Naive thymus-derived CD4-positive, alpha-beta T cell (primary cell): ENCODE measurements at regions of chr1 and their contacts with region 1.

Region 1: DNA sequence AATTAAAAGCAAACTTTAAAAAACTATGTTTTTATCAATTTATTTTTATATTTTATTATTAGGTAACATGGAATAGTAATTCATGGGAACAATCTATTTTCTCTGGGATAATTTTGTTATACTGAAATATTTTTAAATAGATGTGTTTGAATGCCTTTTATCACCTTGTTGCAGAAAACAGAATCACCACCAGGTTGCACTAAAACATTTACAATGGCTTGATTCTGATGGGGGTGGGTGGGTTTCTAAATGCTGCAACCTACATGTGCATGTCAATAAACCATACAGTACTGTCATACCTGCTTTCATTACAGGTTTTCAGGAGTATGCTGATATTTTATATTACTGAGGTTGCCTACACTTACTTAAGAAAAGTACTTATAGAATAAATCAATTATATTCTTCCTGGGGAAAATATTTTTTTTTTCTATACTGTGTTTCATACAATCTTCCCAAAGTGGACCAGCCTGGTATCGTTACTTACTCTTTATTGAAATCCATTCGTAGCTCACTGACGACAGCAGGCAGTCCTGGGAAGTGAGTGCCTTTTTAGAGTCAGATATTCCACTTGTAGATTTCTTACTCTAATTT is 132.8 kb downstream of the PTPRC start:
- DNase-seq: no peak
- ATAC-seq: peak; percentile 40
- H3K4me3 ChIP-seq: no peak overlapping the region
- H3K4me3 Mint-ChIP-seq: no peak overlapping the region
- H3K27ac ChIP-seq: no peak overlapping the region
- H3K27ac Mint-ChIP-seq: no peak overlapping the region
- H3K4me1 ChIP-seq: no peaks in the 10 kb centered on the region
- H3K4me1 Mint-ChIP-seq: peaks cover 0 to 12% (median 3%) of the 10 kb centered on the region in 7 donors
- H3K27me3 ChIP-seq: no peaks in the 10 kb centered on the region
- H3K27me3 Mint-ChIP-seq: peaks cover 0 to 3% (median 0%) of the 10 kb centered on the region in 5 donors

Region 2: DNA sequence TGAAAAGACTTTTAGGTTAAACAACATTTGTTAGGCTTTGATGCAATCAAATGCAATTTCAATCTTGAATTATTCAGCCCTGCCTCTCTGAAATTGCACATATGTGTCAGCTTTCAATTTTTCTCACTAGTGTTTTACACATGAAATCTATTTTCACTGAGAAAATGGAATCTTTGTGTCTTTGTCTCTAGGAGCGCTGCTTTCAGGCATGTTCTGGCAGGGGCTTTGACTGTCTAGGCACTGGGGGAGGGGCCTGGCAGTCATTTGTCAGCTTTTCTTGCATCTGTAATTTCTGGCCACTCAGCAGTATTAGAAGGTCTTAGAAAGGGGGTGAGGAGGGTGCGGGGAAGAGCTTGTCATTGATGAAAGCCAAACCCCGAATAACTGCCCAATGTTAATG is 131.5 kb after region 1 on chr1:
- CTCF ChIA-PET with region 1: no interaction called
- POLR2A ChIA-PET with region 1: no interaction called
- intact Hi-C with region 1: loop called in 1 of 2 experiments (anchors 10 kb)
- DNase-seq: no peak
- ATAC-seq: no peak
- H3K4me3 ChIP-seq: no peak overlapping the region
- H3K4me3 Mint-ChIP-seq: no peak overlapping the region
- H3K27ac ChIP-seq: no peak overlapping the region
- H3K27ac Mint-ChIP-seq: peak overlapping the region in 1 of 9 donors; percentile 12
- H3K4me1 ChIP-seq: peaks cover 0 to 12% of the 10 kb centered on the region in 2 donors
- H3K4me1 Mint-ChIP-seq: peaks cover 9 to 59% (median 24%) of the 10 kb centered on the region in 7 donors
- H3K27me3 ChIP-seq: no peaks in the 10 kb centered on the region
- H3K27me3 Mint-ChIP-seq: no peaks in the 10 kb centered on the region

Region 3: GRCh38 chr1:199046618-199047017 is 275.0 kb after region 1 on chr1:
- CTCF ChIA-PET with region 1: interaction called, 4 read pairs
- POLR2A ChIA-PET with region 1: no interaction called
- intact Hi-C with region 1: loop called in 1 of 2 experiments (anchors 5 kb)
- DNase-seq: no peak
- ATAC-seq: no peak
- H3K4me3 ChIP-seq: no peak overlapping the region
- H3K4me3 Mint-ChIP-seq: no peak overlapping the region
- H3K27ac ChIP-seq: no peak overlapping the region
- H3K27ac Mint-ChIP-seq: peak overlapping the region in 1 of 9 donors; percentile 12
- H3K4me1 ChIP-seq: peaks cover 3 to 6% of the 10 kb centered on the region in 2 donors
- H3K4me1 Mint-ChIP-seq: peaks cover 3 to 38% (median 11%) of the 10 kb centered on the region in 7 donors
- H3K27me3 ChIP-seq: no peaks in the 10 kb centered on the region
- H3K27me3 Mint-ChIP-seq: no peaks in the 10 kb centered on the region

Region 4: DNA sequence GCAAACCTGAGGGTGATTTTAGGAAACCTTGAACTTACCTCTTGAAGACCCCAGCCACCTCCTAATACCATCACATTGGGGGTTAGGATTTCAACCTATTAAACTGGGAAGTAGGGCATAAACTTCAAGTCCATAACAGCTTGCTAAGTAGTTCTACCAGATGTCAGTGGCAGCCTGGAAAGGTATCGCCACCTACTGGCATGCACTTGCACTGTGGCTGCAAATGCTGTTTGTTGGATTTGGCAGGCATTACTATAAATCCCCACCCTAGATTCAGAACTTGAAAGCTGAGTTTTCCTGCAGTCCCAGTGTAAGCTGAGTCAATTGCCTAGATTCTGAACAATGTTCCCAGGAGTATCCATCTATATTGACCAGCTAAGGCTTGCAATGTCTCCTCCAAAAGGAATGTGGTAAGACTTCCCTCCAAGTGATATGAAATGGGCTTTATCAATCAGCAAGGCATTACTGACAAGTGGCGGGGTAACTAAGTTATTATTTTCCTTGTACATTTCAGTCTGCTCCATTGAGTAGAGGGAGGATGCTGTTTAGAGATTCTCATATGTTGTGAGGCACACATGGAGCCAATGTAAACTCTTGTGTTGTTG is 341.7 kb after region 1 on chr1:
- CTCF ChIA-PET with region 1: interaction called, 3 read pairs
- POLR2A ChIA-PET with region 1: no interaction called
- intact Hi-C with region 1: loop called (anchors 1 to 2 kb)
- DNase-seq: peak; percentile 26 to 64 (median 44)
- ATAC-seq: peak; percentile 80
- H3K4me3 ChIP-seq: no peak overlapping the region
- H3K4me3 Mint-ChIP-seq: peak overlapping the region in 1 of 10 donors; percentile 7
- H3K27ac ChIP-seq: no peak overlapping the region
- H3K27ac Mint-ChIP-seq: peak overlapping the region in 1 of 9 donors; percentile 4
- H3K4me1 ChIP-seq: no peaks in the 10 kb centered on the region
- H3K4me1 Mint-ChIP-seq: peaks cover 0 to 22% (median 0%) of the 10 kb centered on the region in 7 donors
- H3K27me3 ChIP-seq: no peaks in the 10 kb centered on the region
- H3K27me3 Mint-ChIP-seq: no peaks in the 10 kb centered on the region

Region 5: GRCh38 chr1:199463521-199464128 is 692.0 kb after region 1 on chr1:
- CTCF ChIA-PET with region 1: no interaction called
- POLR2A ChIA-PET with region 1: no interaction called
- intact Hi-C with region 1: loop called in 1 of 2 experiments (anchors 5 kb)
- DNase-seq: peak in 1 of 9 donors; percentile 21
- ATAC-seq: peak; percentile 47
- H3K4me3 ChIP-seq: no peak overlapping the region
- H3K4me3 Mint-ChIP-seq: no peak overlapping the region
- H3K27ac ChIP-seq: no peak overlapping the region
- H3K27ac Mint-ChIP-seq: no peak overlapping the region
- H3K4me1 ChIP-seq: no peaks in the 10 kb centered on the region
- H3K4me1 Mint-ChIP-seq: peaks cover 0 to 1% (median 0%) of the 10 kb centered on the region in 7 donors
- H3K27me3 ChIP-seq: no peaks in the 10 kb centered on the region
- H3K27me3 Mint-ChIP-seq: peaks cover 0 to 7% (median 5%) of the 10 kb centered on the region in 5 donors

Region 6: GRCh38 chr1:199551967-199552565 is 780.4 kb after region 1 on chr1:
- CTCF ChIA-PET with region 1: no interaction called
- POLR2A ChIA-PET with region 1: no interaction called
- intact Hi-C with region 1: loop called (anchors 1 to 5 kb)
- DNase-seq: peak in 4 of 9 donors; percentile 11 to 34 (median 20)
- ATAC-seq: no peak
- H3K4me3 ChIP-seq: no peak overlapping the region
- H3K4me3 Mint-ChIP-seq: no peak overlapping the region
- H3K27ac ChIP-seq: no peak overlapping the region
- H3K27ac Mint-ChIP-seq: no peak overlapping the region
- H3K4me1 ChIP-seq: no peaks in the 10 kb centered on the region
- H3K4me1 Mint-ChIP-seq: peaks cover 0 to 1% (median 0%) of the 10 kb centered on the region in 7 donors
- H3K27me3 ChIP-seq: no peaks in the 10 kb centered on the region
- H3K27me3 Mint-ChIP-seq: peaks cover 9 to 22% (median 15%) of the 10 kb centered on the region in 5 donors